Activated CD4-positive, alpha-beta T cell treated with anti-CD3 and anti-CD28 coated beads for 36 hours (primary cell): ENCODE measurements at regions of chr16 and their contacts with region 1.

Region 1: GRCh38 chr16:67806428-67807147 is at the starts of genes RANBP10 and TSNAXIP1:
- DNase-seq: peak; percentile 98
- ATAC-seq: peak; percentile 96
- H3K4me3 Mint-ChIP-seq: peak within 1 kb of the TSS; percentile 91
- H3K27ac Mint-ChIP-seq: peak within 1 kb of the TSS; percentile 91
- H3K4me1 Mint-ChIP-seq: peaks cover 39% of the 10 kb centered on the region
- H3K27me3 Mint-ChIP-seq: no peaks in the 10 kb centered on the region
- total RNA-seq, gene RANBP10: 15.6 to 18.0 TPM
- total RNA-seq, gene TSNAXIP1: 0.62 to 1.1 TPM

Region 2: GRCh38 chr16:67628216-67628615 is 178.4 kb before region 1 on chr16:
- CTCF ChIA-PET with region 1: no interaction called
- POLR2A ChIA-PET with region 1: no interaction called
- intact Hi-C with region 1: no loop called
- DNase-seq: no peak
- ATAC-seq: no peak
- H3K4me3 Mint-ChIP-seq: no peak overlapping the region
- H3K27ac Mint-ChIP-seq: no peak overlapping the region
- H3K4me1 Mint-ChIP-seq: no peaks in the 10 kb centered on the region
- H3K27me3 Mint-ChIP-seq: no peaks in the 10 kb centered on the region

Region 3: DNA sequence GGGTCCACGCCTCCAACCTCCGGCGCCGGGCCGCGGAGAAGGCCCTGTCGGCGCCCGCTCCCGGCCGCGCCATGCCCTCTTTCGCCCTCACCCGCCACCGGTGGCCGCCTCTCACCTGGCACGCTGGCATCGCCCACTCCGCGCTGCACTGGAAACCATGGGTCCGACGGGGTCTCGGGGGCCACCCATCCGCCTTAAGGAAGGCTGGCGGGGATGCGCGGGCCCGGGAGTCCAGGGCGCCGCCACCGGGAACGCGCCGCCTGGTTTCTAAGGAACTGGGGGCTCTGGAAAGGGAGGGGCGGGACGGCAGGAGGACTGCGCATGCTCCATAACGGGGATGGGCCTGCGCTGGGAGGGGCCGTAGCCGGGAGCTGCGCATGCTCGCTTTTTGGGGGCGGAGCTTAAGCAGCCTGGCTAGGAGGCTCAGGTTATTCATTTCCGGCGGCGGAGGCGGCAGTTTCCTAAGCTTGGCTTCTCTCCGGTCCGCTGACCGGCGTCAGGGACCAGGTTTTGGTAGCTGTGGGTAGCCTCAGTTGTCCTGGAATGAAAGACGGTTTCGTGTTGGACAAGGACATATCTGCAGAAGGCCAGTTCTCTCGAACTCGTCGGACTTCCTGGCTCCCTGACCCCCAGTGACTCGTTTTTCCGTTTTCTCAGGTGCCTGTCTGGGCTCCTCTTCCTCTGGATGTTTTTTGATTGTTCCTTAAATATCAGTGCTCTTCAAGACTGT is 87.4 kb before region 1 on chr16 and contains the start of gene GFOD2:
- CTCF ChIA-PET with region 1: interaction called, 5 read pairs
- POLR2A ChIA-PET with region 1: no interaction called
- intact Hi-C with region 1: loop called (anchors 1 kb)
- DNase-seq: peak; percentile 99
- ATAC-seq: peak; percentile 95
- H3K4me3 Mint-ChIP-seq: peak within 1 kb of the TSS; percentile 82
- H3K27ac Mint-ChIP-seq: peak within 1 kb of the TSS; percentile 98
- H3K4me1 Mint-ChIP-seq: peaks cover 29% of the 10 kb centered on the region
- H3K27me3 Mint-ChIP-seq: no peaks in the 10 kb centered on the region
- total RNA-seq, gene GFOD2: 8.7 to 11.5 TPM

Region 4: DNA sequence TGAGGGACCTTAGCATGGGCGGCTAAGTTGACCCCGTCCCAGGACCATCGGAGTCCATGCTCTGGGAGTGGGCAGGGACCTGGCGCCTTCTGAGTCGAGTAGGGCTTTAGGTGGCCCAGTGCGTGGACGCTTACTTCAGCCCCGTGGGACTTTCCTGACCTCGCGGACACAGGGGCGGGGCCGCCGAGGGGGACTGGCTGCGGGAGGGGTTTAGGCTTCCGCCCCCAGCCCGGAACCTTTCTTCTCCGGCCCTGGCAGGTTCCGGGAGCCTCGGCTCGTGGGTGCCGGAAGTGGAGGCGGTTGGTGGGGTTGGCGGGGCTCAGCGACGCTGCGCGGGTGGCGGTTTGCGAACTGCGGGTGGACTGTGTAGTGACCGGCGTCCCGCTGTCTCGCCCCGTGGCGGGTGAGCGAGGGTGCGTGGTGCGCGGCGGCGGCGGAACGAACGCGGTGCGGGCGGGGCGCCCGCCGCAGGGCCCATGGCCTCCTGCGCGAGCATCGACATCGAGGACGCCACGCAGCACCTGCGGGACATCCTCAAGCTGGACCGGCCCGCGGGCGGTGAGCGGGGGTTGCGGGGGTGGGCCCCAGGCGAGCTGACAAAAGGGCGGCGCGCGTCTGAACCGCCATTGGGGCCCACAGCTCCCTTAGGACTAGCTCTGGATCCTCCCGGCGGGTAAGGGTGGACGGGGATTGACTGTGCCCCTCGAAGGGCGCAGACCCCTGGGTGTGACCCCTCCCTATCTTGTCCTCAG is 66.4 kb after region 1 on chr16 and contains the start of gene EDC4:
- CTCF ChIA-PET with region 1: no interaction called
- POLR2A ChIA-PET with region 1: no interaction called
- intact Hi-C with region 1: loop called in 1 of 2 experiments (anchors 1 kb)
- DNase-seq: peak; percentile 92
- ATAC-seq: peak; percentile 89
- H3K4me3 Mint-ChIP-seq: peak within 1 kb of the TSS; percentile 77
- H3K27ac Mint-ChIP-seq: peak within 1 kb of the TSS; percentile 92
- H3K4me1 Mint-ChIP-seq: peaks cover 30% of the 10 kb centered on the region
- H3K27me3 Mint-ChIP-seq: no peaks in the 10 kb centered on the region
- total RNA-seq, gene EDC4: 92.8 to 96.9 TPM

Region 5: GRCh38 chr16:67968400-67969253 is 162.0 kb after region 1 on chr16 and contains the start of gene SLC12A4:
- CTCF ChIA-PET with region 1: no interaction called
- POLR2A ChIA-PET with region 1: no interaction called
- intact Hi-C with region 1: loop called (anchors 1 kb)
- DNase-seq: peak; percentile 94
- ATAC-seq: peak; percentile 90
- H3K4me3 Mint-ChIP-seq: peak within 1 kb of the TSS; percentile 84
- H3K27ac Mint-ChIP-seq: peak within 1 kb of the TSS; percentile 80
- H3K4me1 Mint-ChIP-seq: peaks cover 14% of the 10 kb centered on the region
- H3K27me3 Mint-ChIP-seq: no peaks in the 10 kb centered on the region
- total RNA-seq, gene SLC12A4: 21.8 to 25.8 TPM

Region 6: GRCh38 chr16:68237243-68238028 is 430.8 kb after region 1 on chr16:
- CTCF ChIA-PET with region 1: no interaction called
- POLR2A ChIA-PET with region 1: interaction called, 3 read pairs
- intact Hi-C with region 1: loop called in 1 of 2 experiments (anchors 2 kb)
- DNase-seq: peak; percentile 96
- ATAC-seq: peak; percentile 79
- H3K4me3 Mint-ChIP-seq: peak overlapping the region; percentile 83
- H3K27ac Mint-ChIP-seq: peak overlapping the region; percentile 86
- H3K4me1 Mint-ChIP-seq: peaks cover 40% of the 10 kb centered on the region
- H3K27me3 Mint-ChIP-seq: no peaks in the 10 kb centered on the region